Right lobe of liver (tissue), 6 donors: ENCODE measurements at regions of chr2 and their contacts with region 1.

Region 1: DNA sequence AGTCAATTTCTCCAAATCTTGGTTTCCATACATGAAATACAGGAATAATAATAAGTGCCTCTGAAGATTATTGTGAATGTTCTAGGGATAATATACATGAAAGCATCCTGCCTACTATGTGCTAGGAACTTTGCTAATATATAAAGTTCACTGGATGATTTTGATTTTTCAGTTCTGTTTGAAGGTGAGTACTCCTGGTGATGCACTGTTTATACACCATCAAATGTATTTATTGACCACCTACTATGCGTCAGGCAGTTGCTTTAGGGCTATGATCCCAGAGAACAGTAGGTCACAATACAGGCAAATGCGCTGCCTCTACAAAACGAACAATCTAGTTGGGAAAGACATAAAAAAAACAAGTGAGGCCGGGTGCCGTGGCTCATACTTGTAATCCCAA is 10.8 kb downstream of the TXNDC9 start:
- DNase-seq: no peak
- ATAC-seq: no peak
- H3K4me3 ChIP-seq: no peak overlapping the region
- H3K27ac ChIP-seq: no peak overlapping the region
- H3K4me1 ChIP-seq: no peaks in the 10 kb centered on the region
- H3K27me3 ChIP-seq: no peaks in the 10 kb centered on the region
- CTCF ChIP-seq: no peak
- POLR2A ChIP-seq: no peak

Region 2: GRCh38 chr2:99106913-99107312 is 218.4 kb before region 1 on chr2:
- intact Hi-C with region 1: no loop called
- DNase-seq: no peak
- ATAC-seq: no peak
- H3K4me3 ChIP-seq: no peak overlapping the region
- H3K27ac ChIP-seq: no peak overlapping the region
- H3K4me1 ChIP-seq: no peaks in the 10 kb centered on the region
- H3K27me3 ChIP-seq: no peaks in the 10 kb centered on the region
- CTCF ChIP-seq: no peak
- POLR2A ChIP-seq: no peak

Region 3: DNA sequence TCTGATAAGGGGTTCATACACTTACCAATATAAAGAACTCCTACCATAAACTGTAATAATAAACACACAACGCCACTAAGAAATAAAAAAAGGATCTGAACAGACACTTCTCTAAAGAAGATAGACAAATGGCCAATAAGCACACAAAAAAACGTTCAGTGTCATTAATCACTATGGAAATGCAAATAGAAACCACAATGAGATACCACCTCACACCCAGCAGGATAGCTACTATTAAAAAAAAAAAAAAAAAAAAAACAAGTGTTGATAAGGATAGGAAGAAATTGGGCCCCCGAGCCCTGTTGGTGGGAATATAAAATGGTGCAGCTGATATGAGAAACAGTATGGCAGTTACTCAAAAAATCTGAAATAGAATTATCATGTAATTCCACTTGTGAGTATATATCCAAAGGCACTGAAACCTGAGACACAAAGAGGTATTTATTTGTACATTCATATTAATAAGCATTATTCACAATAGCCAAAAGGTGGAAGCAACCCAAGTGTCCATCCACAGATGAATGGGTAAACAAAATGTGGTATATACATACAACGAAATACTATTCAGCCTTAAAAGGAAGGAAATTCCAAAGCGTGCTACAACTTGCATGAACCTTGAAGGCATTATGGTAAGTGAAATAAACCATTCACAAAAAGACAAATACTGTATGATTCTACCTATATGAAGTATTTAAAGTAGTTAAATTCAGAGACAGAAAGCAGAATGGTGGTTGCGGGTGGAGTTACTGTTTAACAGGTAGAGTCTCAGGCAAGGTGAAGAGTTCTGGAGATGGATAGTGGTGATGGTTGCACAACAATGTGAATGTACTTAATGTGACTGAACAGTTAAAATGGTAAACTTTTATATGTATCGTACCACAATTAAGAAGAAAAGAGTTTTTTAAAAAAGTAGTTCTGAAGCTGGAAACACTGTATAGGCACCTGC is 146.6 kb after region 1 on chr2:
- intact Hi-C with region 1: no loop called
- DNase-seq: no peak
- ATAC-seq: no peak
- H3K4me3 ChIP-seq: no peak overlapping the region
- H3K27ac ChIP-seq: no peak overlapping the region
- H3K4me1 ChIP-seq: peaks cover 0 to 32% (median 10%) of the 10 kb centered on the region in 4 donors
- H3K27me3 ChIP-seq: no peaks in the 10 kb centered on the region
- CTCF ChIP-seq: no peak
- POLR2A ChIP-seq: no peak

Region 4: DNA sequence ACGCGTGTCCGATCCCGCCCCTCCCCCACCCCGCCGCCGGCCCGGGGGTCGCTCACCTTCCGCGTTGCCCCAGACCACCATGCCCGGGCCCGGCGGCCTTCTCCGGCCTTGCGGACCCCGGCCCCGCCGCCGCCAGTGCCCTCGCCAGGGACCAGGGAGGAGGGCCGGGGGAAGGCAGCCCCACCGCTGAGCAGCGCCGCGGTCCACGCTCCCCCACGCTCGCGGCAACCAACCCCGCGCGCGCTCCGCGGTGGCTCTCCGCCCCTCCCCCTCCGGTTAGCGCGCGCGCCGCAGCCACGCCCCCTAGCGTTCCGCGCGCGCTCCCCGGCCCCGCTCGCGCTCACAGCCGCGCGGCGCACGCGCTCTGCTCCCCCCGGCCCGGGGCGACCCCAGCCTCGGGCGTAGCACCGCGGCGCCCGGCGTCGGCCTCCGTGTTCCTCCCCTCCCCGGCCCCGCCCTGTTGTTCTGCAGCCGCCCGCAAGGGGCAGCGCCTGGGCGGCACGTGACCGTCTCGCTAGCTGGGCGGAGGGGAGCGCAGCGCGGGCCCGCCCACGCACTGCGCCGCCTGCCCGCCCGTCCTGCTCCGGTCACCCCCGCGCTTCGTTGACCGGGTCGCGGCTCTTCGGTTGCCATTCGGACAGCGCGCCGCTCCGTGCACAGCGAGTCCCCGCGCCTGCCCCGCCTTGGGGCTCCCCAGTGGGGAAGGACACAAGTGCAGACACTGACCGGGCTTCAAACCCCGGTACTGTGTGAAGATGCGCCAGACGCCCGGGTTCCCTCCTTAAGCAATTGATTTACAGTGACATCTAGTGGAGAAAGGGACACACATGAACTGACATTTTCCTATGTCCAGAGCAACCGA is 164.6 kb after region 1 on chr2 and contains the start of gene REV1:
- intact Hi-C with region 1: loop called in 1 of 2 experiments (anchors 10 kb)
- DNase-seq: peak; percentile 95 to 97 (median 96)
- ATAC-seq: peak; percentile 88 to 95 (median 91)
- H3K4me3 ChIP-seq: peak within 1 kb of the TSS; percentile 65 to 82 (median 77)
- H3K27ac ChIP-seq: peak within 1 kb of the TSS; percentile 92 to 98 (median 94)
- H3K4me1 ChIP-seq: peaks cover 0 to 13% (median 6%) of the 10 kb centered on the region in 4 donors
- H3K27me3 ChIP-seq: no peaks in the 10 kb centered on the region
- CTCF ChIP-seq: peak; percentile 54 to 95 (median 70)
- POLR2A ChIP-seq: no peak
- total RNA-seq, gene REV1: 12.6 to 21.6 (median 13.6) TPM